ENCODE measurements at regions of chr17 and their contacts with region 1.

Region 1: GRCh38 chr17:32253117-32253611 is 12.5 kb upstream of the RHBDL3 start:
- DNase-seq: peak; percentile 73 to 97 (median 86)

Region 2: GRCh38 chr17:32319548-32319905 is 66.4 kb after region 1 on chr17:
- intact Hi-C with region 1: loop called (anchors 1 kb)
- DNase-seq: peak; percentile 45 to 96 (median 80)

Measured in posterior cingulate gyrus (tissue), 11 donors.